Natural killer cell (primary cell): ENCODE measurements at regions of chr2 and their contacts with region 1.

Region 1: DNA sequence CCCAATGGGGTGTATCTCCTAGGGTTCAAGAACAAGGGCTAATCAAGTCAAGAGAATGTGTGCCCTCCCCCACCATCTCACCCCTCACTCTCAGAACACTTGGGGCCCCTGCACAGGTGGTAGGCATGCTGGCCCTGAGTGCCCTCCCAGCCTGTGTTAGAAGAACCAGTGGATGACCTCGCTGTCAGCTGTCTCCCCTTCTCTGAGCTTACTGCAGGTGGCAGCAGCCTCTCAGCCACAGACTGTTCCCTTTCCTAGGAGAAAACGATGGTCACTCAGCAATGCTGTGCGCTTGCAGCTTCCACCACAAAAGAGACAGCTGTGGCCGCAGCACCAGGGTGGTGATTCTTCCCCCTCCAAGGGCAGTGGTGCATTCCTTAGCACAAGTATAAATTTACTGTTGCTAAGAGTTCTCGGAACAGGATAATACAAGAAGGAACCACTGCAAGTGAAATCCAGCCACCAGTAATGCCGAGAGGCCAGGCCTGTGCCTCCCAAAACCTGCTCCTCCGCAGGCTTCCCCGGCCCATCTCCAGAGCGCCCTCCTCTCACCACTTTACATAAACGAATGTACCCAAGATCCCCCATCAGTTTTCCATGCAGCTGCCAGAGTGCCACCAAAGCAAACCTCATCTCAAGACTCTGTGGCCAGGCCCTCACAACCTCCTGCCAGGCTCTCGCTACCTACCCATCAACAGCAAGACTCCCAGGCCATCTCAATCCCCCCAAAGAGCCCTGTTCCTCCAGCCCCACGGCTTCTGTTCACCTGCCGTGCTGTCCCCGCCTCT is 935 bp upstream of the RAMP1 start:
- DNase-seq: peak; percentile 54 to 69
- ATAC-seq: peak; percentile 80 to 94 (median 86)
- H3K4me3 ChIP-seq: peak overlapping the region; percentile 17
- H3K4me3 Mint-ChIP-seq: peak overlapping the region; percentile 93
- H3K27ac ChIP-seq: no peak overlapping the region
- H3K27ac Mint-ChIP-seq: peak overlapping the region; percentile 62 to 84
- H3K4me1 ChIP-seq: peaks cover 24% of the 10 kb centered on the region
- H3K4me1 Mint-ChIP-seq: peaks cover 14 to 18% of the 10 kb centered on the region in 2 donors
- H3K27me3 ChIP-seq: no peaks in the 10 kb centered on the region
- H3K27me3 Mint-ChIP-seq: peaks cover 12 to 14% of the 10 kb centered on the region in 2 donors
- CTCF ChIP-seq: peak; percentile 75

Region 2: DNA sequence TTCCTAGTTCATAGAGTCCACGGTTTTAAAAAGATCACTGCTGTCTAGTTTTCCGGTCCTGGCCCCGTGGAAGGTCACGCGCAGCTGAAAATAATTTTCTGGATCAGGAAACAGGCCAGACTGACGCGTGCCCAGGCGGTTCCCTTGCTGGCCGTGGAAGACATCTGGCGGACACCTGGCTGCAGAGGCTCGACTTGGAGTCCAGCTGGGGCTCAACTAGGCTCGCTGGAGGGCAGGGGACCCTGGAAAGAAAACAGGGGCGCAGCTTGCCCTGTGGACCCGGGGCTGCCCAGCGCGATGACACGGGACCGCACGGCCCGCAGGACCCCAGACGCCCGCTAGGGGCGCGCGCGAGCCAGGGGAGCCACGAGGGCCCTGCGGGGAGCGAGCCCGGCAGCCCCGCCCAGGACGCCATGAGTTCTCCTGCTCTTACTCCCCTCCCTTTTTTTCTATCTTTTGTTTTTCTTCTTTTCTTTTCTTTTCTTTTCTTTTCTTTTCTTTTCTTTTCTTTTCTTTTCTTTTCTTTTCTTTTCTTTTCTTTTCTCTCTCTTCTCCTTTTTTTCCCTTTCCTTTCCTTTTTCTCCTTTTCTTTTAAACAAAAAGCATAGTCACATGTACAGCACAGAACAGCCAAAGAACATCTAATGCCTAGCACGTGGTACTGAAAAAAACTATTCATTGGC is 65.1 kb after region 1 on chr2:
- intact Hi-C with region 1: loop called (anchors 1 kb)
- DNase-seq: peak; percentile 81 to 90
- ATAC-seq: peak; percentile 98 to 100 (median 99)
- H3K4me3 ChIP-seq: peak overlapping the region; percentile 48
- H3K4me3 Mint-ChIP-seq: peak overlapping the region; percentile 85
- H3K27ac ChIP-seq: peak overlapping the region; percentile 51
- H3K27ac Mint-ChIP-seq: peak overlapping the region; percentile 8 to 84
- H3K4me1 ChIP-seq: peaks cover 38% of the 10 kb centered on the region
- H3K4me1 Mint-ChIP-seq: peaks cover 30 to 34% of the 10 kb centered on the region in 2 donors
- H3K27me3 ChIP-seq: no peaks in the 10 kb centered on the region
- H3K27me3 Mint-ChIP-seq: no peaks in the 10 kb centered on the region
- CTCF ChIP-seq: peak; percentile 97

Region 3: DNA sequence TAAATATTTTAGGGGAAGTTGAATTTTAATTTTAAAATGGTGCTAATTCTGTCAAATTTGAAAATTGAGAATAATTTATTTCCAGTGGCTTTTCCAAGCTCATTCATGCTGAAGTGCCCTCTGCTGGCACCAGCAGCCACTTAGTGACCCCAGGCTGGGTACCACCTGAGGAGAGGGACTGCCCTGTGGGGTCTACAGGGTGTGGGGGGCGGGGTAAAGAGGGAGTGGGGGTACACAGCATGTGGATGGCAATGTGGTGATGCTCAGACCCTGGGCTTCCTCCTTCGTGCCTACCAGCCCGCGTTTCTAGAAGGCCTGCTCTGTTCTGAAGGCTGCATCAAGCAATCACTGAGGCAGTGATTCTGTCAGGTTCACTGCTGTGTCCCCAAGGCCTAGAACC is 157.2 kb after region 1 on chr2:
- intact Hi-C with region 1: loop called (anchors 1 kb)
- DNase-seq: peak in 1 of 2 donors; percentile 31
- ATAC-seq: no peak
- H3K4me3 ChIP-seq: no peak overlapping the region
- H3K4me3 Mint-ChIP-seq: no peak overlapping the region
- H3K27ac ChIP-seq: no peak overlapping the region
- H3K27ac Mint-ChIP-seq: peak overlapping the region; percentile 81 to 83
- H3K4me1 ChIP-seq: peaks cover 8% of the 10 kb centered on the region
- H3K4me1 Mint-ChIP-seq: peaks cover 45 to 48% of the 10 kb centered on the region in 2 donors
- H3K27me3 ChIP-seq: no peaks in the 10 kb centered on the region
- H3K27me3 Mint-ChIP-seq: no peaks in the 10 kb centered on the region
- CTCF ChIP-seq: no peak

Region 4: DNA sequence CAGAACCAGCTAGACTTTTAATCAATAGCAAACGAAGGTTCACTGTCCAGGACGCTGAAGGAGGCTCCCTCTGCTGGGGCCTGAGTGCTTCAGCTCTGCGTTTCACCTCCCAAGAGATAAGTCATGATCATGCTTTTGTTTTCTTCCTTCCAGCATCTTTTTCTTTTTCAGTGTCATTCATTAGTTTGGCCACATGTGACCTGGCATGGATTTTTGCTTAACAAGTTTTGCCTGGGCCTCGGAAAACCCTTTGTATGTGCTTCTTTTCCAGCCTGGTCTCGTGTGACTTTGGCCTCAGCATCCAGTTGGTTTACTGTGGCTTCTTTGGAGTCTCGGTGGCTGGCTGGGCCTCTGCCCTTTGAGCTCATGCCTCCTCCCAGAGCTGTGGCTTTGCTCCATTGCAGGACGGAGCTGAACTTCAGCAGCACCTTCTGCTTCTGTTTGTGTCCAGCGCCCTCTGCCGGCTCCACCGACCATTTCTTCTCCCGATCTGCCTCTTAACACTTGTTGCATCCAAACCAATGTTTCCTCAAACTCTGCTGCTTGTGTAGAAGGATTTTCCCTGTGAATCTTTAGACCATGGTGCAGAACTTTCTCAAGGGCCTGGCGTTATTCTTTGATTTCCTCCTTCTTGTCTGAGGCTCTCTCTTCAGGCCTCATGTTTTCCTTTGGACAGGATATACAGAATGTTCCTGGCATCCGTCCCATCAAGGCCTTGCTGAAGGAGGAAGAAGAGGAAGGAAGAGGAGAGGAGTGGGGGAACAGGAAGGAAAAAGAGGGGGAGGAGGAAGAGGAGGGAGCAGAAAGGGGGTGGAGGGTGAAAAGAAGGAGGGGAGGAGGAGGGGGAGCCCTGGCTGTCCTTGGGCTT is 404.9 kb after region 1 on chr2:
- intact Hi-C with region 1: loop called (anchors 1 kb)
- DNase-seq: peak; percentile 73 to 83
- ATAC-seq: peak; percentile 70 to 77 (median 74)
- H3K4me3 ChIP-seq: no peak overlapping the region
- H3K4me3 Mint-ChIP-seq: no peak overlapping the region
- H3K27ac ChIP-seq: no peak overlapping the region
- H3K27ac Mint-ChIP-seq: no peak overlapping the region
- H3K4me1 ChIP-seq: peaks cover 3% of the 10 kb centered on the region
- H3K4me1 Mint-ChIP-seq: peaks cover 4 to 7% of the 10 kb centered on the region in 2 donors
- H3K27me3 ChIP-seq: no peaks in the 10 kb centered on the region
- H3K27me3 Mint-ChIP-seq: no peaks in the 10 kb centered on the region
- CTCF ChIP-seq: peak; percentile 79